ENCODE measurements at regions of chr7 and their contacts with region 1.

Region 1: DNA sequence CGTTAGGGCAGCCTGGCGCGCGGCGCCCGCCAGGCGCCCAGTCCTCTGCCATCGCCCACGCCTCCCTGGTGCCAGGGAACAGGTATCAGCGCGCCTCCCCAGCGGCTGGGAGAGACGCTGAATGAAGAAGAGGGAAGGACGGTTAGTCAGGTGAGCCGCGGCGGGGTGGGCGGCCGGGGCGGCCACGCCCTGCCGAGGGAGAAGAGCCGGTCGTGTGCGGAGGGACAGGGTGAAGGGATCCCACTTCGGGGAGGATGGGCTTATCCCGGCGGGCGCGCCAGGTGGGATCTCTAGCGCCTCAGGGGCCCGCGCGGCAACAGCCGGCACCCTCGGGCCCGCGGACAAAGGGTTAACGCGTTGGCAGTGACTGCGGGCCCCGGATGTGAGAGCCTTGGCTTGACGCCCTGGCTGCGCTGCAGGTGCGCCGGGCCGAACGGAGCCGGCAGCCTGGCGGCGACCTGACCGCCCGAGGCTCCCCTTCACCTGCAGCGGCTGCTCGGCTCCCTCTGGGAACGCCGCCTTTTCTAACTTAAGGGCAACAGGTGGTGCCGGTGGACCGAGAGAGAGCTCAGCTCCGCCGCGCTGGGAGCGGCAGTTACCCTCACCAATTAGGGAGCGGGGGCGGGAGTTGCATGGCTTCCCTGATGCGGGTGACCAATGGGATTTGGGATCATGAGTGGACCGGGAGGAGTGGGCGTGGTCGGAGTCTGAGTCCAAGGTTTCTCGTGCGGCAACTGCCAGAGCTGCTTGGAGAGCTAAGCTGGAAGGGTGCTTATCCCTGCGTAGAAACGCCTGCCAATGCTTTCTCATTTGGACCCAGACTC is at the start of gene ARL4A:
- DNase-seq: peak; percentile 91 to 100 (median 96)
- ATAC-seq: peak; percentile 87
- H3K4me3 ChIP-seq: peak within 1 kb of the TSS; percentile 61
- H3K27ac ChIP-seq: peak within 1 kb of the TSS; percentile 95
- H3K4me1 ChIP-seq: peaks cover 8 to 9% of the 10 kb centered on the region in 2 experiments; a peak in 3 of 5 replicates
- H3K27me3 ChIP-seq: no peaks in the 10 kb centered on the region
- CTCF ChIP-seq: peak; percentile 67 to 84 (median 83)
- EP300 ChIP-seq: no peak
- POLR2A ChIP-seq: peak; percentile 99
- RAD21 ChIP-seq: peak; percentile 90 to 98
- polyA plus RNA-seq, gene ARL4A: 553 to 688 TPM

Region 2: DNA sequence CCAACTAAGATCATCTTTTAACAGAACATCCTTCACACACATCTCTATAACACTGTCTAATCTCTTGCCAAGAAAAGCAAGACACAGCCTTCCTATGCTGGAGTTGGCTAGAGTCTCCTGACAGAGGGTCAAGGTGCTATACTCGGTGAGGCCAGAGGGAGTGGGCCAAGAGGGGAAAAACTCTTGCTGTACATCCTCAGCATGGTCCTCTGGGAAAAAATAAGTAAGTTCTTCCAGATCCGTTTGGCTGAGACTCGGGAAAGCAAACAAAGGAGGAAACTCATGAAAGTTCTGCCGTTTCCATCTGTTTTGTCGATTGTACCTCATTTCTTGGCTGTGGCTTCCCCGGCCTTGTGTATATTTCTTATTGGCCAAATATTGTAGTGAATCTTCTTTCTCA is 317.4 kb before region 1 on chr7:
- CTCF ChIA-PET with region 1: no interaction called
- POLR2A ChIA-PET with region 1: no interaction called
- in situ Hi-C with region 1: no loop called
- intact Hi-C with region 1: no loop called
- DNase-seq: no peak
- ATAC-seq: peak; percentile 66
- H3K4me3 ChIP-seq: no peak overlapping the region
- H3K27ac ChIP-seq: no peak overlapping the region
- H3K4me1 ChIP-seq: no peaks in the 10 kb centered on the region
- H3K27me3 ChIP-seq: no peaks in the 10 kb centered on the region
- CTCF ChIP-seq: no peak
- EP300 ChIP-seq: no peak
- POLR2A ChIP-seq: 0 out of 2 replicates have a peak, but pooled peaks have one; percentile 26
- RAD21 ChIP-seq: no peak

Region 3: DNA sequence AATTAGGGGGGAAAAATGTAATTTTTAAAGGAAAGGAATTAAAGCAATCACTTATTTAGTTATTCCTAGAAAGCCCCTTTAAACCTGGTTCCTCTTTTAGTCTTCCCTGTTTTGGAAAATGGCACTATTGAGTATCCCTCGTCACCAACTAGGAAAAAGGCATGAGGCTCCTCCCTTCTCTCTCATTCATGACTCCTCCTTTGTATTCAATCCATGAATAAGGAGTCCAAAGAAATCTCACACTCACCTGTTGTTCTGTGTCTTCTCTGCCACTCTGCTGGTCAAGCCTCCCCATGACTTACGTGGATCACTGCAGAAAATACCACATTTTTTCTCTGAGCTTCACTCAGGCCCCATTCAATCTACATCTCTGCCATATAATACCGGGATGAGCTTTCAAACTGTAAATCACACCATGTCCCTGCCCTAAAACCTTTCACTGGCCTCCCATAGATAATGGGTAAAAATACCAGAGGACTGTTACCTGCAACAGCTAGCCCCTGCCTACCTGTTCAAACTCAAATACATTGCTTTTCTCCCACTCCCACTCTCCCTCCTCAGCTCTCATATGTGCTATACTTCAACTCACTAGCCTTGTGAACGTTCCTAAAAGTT is 277.9 kb before region 1 on chr7:
- CTCF ChIA-PET with region 1: no interaction called
- POLR2A ChIA-PET with region 1: no interaction called
- in situ Hi-C with region 1: no loop called
- intact Hi-C with region 1: no loop called
- DNase-seq: peak in 1 of 4 experiments; percentile 13
- ATAC-seq: peak; percentile 25
- H3K4me3 ChIP-seq: no peak overlapping the region
- H3K27ac ChIP-seq: no peak overlapping the region
- H3K4me1 ChIP-seq: peaks cover 2 to 3% of the 10 kb centered on the region in 2 experiments; a peak in 2 of 5 replicates
- H3K27me3 ChIP-seq: no peaks in the 10 kb centered on the region
- CTCF ChIP-seq: no peak
- EP300 ChIP-seq: no peak
- POLR2A ChIP-seq: no peak
- RAD21 ChIP-seq: no peak

Region 4: GRCh38 chr7:12524794-12525386 is 162.2 kb before region 1 on chr7:
- CTCF ChIA-PET with region 1: interaction called, 4 read pairs
- POLR2A ChIA-PET with region 1: interaction called, 3 read pairs
- in situ Hi-C with region 1: no loop called
- intact Hi-C with region 1: loop called (anchors 2 kb)
- DNase-seq: peak; percentile 20 to 63 (median 34)
- ATAC-seq: peak; percentile 77
- H3K4me3 ChIP-seq: no peak overlapping the region
- H3K27ac ChIP-seq: no peak overlapping the region
- H3K4me1 ChIP-seq: no peaks in the 10 kb centered on the region
- H3K27me3 ChIP-seq: no peaks in the 10 kb centered on the region
- CTCF ChIP-seq: peak; percentile 20 to 81 (median 51); a peak in 3 of 6 replicates
- EP300 ChIP-seq: no peak
- POLR2A ChIP-seq: no peak
- RAD21 ChIP-seq: peak; percentile 91 to 92

Region 5: GRCh38 chr7:12715372-12716133 is 28.4 kb after region 1 on chr7:
- CTCF ChIA-PET with region 1: no interaction called
- POLR2A ChIA-PET with region 1: interaction called, 23 read pairs
- in situ Hi-C with region 1: no loop called
- intact Hi-C with region 1: loop called (anchors 1 kb)
- DNase-seq: peak; percentile 74 to 98 (median 82)
- ATAC-seq: peak; percentile 86
- H3K4me3 ChIP-seq: peak overlapping the region; percentile 56
- H3K27ac ChIP-seq: peak overlapping the region; percentile 98
- H3K4me1 ChIP-seq: peaks cover 10 to 50% of the 10 kb centered on the region in 2 experiments
- H3K27me3 ChIP-seq: no peaks in the 10 kb centered on the region
- CTCF ChIP-seq: no peak
- EP300 ChIP-seq: peak; percentile 93
- POLR2A ChIP-seq: peak; percentile 94
- RAD21 ChIP-seq: peak in 1 of 2 experiments; percentile 43; a peak in 2 of 4 replicates

Region 6: DNA sequence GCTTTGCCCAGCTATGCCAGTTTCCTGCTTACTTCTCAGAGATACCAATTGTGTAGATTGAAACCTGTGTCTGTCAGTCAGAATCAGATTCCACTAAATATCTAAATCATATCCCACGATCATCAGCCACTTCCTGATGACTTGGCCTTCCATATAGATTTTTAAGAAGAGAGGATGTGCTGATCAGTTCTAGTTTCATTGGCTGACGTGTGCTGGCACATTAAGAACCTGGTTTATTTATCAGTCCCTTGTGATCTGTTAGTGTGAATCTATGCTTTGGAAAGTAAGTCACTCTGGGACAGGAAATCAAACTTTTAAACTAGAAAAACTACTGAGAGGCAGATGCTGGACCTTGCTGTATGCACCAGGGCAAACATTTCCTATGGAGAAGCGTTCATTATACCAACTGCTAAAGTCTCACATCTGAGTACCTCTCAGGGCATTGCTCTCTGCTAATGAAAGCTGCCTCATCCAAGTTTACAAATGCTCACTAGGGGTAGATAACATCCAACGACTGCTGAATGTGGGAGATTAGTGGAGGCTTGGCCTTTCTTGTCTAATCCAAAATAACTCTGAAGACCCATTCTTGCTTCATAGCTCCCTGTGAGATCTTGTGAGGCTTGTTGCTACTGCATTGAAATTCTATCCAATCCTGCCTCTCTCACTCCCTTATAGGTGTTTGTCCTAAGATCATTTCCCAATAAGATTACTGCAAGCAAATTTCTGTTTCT is 109.5 kb after region 1 on chr7:
- CTCF ChIA-PET with region 1: no interaction called
- POLR2A ChIA-PET with region 1: no interaction called
- in situ Hi-C with region 1: no loop called
- intact Hi-C with region 1: loop called (anchors 5 kb)
- DNase-seq: peak in 2 of 4 experiments; percentile 26 to 53
- ATAC-seq: peak; percentile 76
- H3K4me3 ChIP-seq: no peak overlapping the region
- H3K27ac ChIP-seq: peak overlapping the region; percentile 6; the same call in 1 of the 3 replicates
- H3K4me1 ChIP-seq: peaks cover 0 to 16% of the 10 kb centered on the region in 2 experiments; a peak in 3 of 5 replicates
- H3K27me3 ChIP-seq: no peaks in the 10 kb centered on the region
- CTCF ChIP-seq: no peak
- EP300 ChIP-seq: peak; percentile 57
- POLR2A ChIP-seq: no peak
- RAD21 ChIP-seq: peak; percentile 14 to 25; a peak in 2 of 4 replicates

Region 7: GRCh38 chr7:13117103-13117502 is 430.0 kb after region 1 on chr7:
- CTCF ChIA-PET with region 1: no interaction called
- POLR2A ChIA-PET with region 1: interaction called, 6 read pairs
- in situ Hi-C with region 1: no loop called
- intact Hi-C with region 1: loop called (anchors 2 kb)
- DNase-seq: peak in 1 of 4 experiments; percentile 22
- ATAC-seq: peak; percentile 64; the same call in 1 of the 3 replicates
- H3K4me3 ChIP-seq: no peak overlapping the region
- H3K27ac ChIP-seq: no peak overlapping the region
- H3K4me1 ChIP-seq: peaks cover 0 to 11% of the 10 kb centered on the region in 2 experiments; a peak in 2 of 5 replicates
- H3K27me3 ChIP-seq: no peaks in the 10 kb centered on the region
- CTCF ChIP-seq: peak; percentile 16 to 48 (median 28); a peak in 2 of 6 replicates
- EP300 ChIP-seq: no peak
- POLR2A ChIP-seq: no peak
- RAD21 ChIP-seq: peak; percentile 65 to 78

Region 8: GRCh38 chr7:13262929-13263530 is 575.9 kb after region 1 on chr7:
- CTCF ChIA-PET with region 1: interaction called, 15 read pairs
- POLR2A ChIA-PET with region 1: no interaction called
- in situ Hi-C with region 1: loop called (anchors 5 kb)
- intact Hi-C with region 1: loop called (anchors 1 kb)
- DNase-seq: peak; percentile 13 to 56 (median 20)
- ATAC-seq: peak; percentile 82
- H3K4me3 ChIP-seq: no peak overlapping the region
- H3K27ac ChIP-seq: no peak overlapping the region
- H3K4me1 ChIP-seq: peaks cover 0 to 6% of the 10 kb centered on the region in 2 experiments; a peak in 2 of 5 replicates
- H3K27me3 ChIP-seq: no peaks in the 10 kb centered on the region
- CTCF ChIP-seq: peak in 2 of 3 experiments; percentile 55 to 74; a peak in 3 of 6 replicates
- EP300 ChIP-seq: no peak
- POLR2A ChIP-seq: no peak
- RAD21 ChIP-seq: peak; percentile 97 to 98